Naive thymus-derived CD8-positive, alpha-beta T cell (primary cell): ENCODE measurements at regions of chr1 and their contacts with region 1.

Region 1: DNA sequence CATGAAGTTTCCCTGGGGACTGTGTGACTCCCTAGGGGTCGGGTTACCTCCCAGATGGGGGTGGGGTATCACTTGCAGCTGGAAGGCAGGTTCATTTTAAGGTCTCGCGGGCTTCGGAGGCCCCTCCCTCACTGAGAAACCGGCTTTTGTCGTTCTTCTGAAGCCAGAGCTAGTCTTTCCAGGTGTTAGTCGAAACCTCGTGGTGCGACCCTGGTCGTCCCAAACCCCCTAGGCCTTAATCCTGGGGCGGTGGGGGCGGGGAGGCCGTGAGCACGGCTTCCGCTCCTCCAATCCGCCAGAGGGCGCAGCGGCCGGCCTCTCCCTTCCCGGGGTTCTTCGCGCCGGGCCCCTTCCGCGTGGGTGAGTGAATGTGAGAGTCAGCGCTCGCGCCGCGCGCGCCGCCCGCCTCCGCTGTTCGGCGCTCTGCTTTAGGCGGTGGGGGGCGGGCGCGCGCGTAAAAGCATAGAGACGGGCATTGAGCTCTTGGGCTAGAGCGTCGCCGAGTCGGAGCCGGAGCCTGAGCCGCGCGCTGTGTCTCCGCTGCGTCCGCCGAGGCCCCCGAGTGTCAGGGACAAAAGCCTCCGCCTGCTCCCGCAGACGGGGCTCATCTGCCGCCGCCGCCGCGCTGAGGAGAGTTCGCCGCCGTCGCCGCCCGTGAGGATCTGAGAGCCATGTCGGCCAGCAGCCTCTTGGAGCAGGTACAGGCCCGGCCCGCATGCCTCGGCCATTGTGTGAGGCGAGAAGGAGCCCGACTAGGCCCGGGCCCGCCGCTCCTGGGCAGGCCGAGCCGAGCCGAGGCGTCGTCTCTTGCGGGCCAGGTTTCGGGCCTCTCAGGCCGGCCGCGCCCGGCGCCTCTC is at the start of gene YTHDF2:
- DNase-seq: peak; percentile 93 to 99 (median 98)
- ATAC-seq: peak; percentile 92 to 93
- H3K4me3 Mint-ChIP-seq: peak within 1 kb of the TSS; percentile 91 to 100 (median 96)
- H3K27ac Mint-ChIP-seq: peak within 1 kb of the TSS; percentile 93 to 99 (median 96)
- H3K4me1 Mint-ChIP-seq: peaks cover 10 to 43% (median 38%) of the 10 kb centered on the region in 4 donors
- H3K27me3 Mint-ChIP-seq: no peaks in the 10 kb centered on the region
- polyA plus RNA-seq, gene YTHDF2: 117 to 128 (median 118) TPM

Region 2: DNA sequence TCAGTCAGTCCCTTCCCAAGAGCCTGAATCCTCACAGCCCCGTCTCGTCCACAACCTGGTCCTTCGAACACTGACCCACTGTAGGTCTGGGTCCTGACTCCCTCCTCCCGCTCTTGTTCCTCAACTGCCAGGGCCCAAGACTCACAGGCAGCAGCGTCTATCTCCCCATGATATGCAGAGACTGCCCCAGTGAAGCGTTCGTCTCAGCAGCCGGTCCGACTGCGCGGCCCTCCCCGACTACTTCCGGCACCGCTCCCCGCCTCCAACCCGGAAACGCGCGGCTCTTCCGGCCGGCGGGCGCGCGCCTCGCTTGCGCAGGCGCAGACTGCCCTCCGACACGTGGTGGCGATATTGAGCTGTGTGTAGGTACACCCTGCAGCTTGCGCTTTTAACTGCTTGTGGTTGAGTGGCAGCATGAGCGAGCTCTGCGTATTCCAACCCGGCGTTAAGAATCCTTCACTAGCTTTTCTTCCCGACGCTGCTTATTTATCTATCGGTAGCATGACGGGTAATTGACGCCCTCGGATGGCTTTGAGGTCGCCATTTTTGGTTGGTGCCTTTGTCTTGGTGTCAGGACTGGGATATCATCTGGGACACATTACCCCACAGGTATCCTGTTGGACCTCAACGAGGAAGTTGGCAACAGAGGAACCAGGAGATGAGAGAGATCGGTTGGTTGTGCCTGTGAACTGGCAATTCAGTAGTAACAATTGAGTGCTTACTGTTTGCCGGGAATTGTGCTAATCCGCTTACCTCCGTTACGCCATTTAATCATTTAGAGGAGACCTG is 93.6 kb before region 1 on chr1 and contains the start of gene TAF12:
- POLR2A ChIA-PET with region 1: interaction called, 93 read pairs
- DNase-seq: peak; percentile 78 to 95 (median 90)
- ATAC-seq: peak; percentile 85 to 86
- H3K4me3 Mint-ChIP-seq: peak within 1 kb of the TSS; percentile 96 to 100 (median 99)
- H3K27ac Mint-ChIP-seq: peak within 1 kb of the TSS; percentile 96 to 99 (median 98)
- H3K4me1 Mint-ChIP-seq: peaks cover 24 to 71% (median 57%) of the 10 kb centered on the region in 4 donors
- H3K27me3 Mint-ChIP-seq: no peaks in the 10 kb centered on the region
- polyA plus RNA-seq, gene TAF12: 42.4 to 50.1 (median 47.3) TPM

Region 3: DNA sequence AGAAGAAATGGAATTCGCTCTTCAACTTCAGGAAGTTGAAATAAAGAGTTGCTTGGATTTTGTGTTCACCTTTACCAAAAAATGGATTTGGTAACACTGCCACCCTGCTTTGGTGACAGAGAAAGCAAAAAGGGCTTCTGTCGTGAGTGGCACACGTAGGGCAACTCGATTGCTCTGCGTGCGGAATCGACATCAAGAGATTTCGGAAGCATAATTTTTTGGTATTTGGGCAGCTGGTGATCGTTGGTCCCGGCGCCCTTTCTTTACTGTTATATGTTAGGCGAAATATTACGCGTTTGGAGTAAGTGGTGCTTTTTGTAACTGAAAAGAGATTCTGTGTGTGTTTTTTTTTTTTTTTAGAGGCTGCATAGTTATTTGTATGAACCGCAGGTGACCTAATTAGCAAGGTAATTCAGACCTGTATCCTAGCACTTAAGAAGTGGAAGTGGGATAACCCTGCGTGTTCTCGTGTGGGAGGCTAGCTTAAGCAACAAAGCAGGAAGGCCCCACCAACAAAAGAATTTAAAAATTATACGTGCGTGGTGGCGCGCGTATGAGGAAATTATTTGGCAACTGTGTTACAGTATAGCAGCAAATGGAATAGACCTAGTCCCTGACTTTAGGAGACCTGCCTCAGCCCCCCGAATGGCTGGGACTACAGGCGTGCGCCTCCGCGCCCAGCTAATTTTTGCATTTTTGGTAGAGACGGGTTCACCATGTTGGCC is 88.0 kb before region 1 on chr1 and contains the start of gene RNU11:
- POLR2A ChIA-PET with region 1: interaction called, 93 read pairs
- DNase-seq: peak; percentile 57 to 99 (median 88)
- ATAC-seq: peak; percentile 78 to 80
- H3K4me3 Mint-ChIP-seq: peak within 1 kb of the TSS; percentile 78 to 97 (median 91)
- H3K27ac Mint-ChIP-seq: peak within 1 kb of the TSS; percentile 98 to 100 (median 99)
- H3K4me1 Mint-ChIP-seq: peaks cover 16 to 38% (median 32%) of the 10 kb centered on the region in 4 donors
- H3K27me3 Mint-ChIP-seq: no peaks in the 10 kb centered on the region
- polyA plus RNA-seq, gene RNU11: not detected

Region 4: DNA sequence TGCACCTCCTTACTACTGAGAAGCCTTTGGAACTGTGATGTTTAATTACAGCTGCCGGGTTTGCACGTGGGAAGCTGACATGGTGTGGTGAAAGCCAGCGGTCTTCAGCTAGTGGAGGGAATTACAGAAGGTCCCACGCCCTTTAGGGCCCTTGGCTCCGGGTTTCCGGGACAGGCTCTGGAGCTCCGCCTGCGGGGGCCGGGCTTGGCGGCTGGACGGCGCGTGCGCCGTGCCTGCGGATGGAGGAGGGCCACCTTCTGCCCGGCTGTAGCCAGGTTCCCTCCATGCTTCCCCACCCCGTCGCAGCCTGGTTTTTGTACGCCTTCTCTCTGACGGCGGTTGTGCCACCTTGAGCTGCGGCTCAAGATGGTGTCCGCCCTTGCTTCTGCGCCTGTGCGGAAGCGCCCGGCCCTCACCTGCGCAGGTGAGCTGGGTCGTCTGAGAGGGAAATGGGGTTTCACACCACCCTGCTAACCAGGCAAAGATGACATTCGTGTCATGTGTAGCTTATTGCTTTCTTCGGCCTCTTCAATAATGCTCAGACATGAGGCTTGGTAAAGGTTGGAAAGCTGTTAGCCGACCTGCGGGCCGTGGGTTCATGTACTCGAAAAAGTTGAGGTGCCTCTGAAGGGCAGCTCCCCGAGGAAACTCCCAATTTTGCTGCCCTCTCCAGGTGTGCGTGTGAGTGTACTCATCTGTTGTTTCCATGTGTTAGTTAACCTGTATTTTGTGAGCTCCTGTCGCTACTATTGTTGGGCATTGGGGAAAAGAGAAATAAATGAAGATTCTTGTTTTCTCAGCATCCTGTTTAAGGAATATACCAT is 38.7 kb after region 1 on chr1:
- POLR2A ChIA-PET with region 1: interaction called, 25 read pairs
- DNase-seq: peak; percentile 55 to 82 (median 72)
- ATAC-seq: peak; percentile 92 to 95
- H3K4me3 Mint-ChIP-seq: peak overlapping the region; percentile 76 to 89 (median 83)
- H3K27ac Mint-ChIP-seq: peak overlapping the region; percentile 64 to 94 (median 89)
- H3K4me1 Mint-ChIP-seq: peaks cover 0 to 15% (median 7%) of the 10 kb centered on the region in 4 donors
- H3K27me3 Mint-ChIP-seq: no peaks in the 10 kb centered on the region